Posterior cingulate gyrus (tissue), 11 donors: ENCODE measurements at regions of chr12 and their contacts with region 1.

Region 1: GRCh38 chr12:106302401-106303201 is at the start of gene TCP11L2:
- DNase-seq: peak; percentile 79 to 98 (median 88)

Region 2: GRCh38 chr12:106247674-106248311 is 54.8 kb before region 1 on chr12 and contains the start of gene CKAP4:
- intact Hi-C with region 1: loop called (anchors 2 kb)
- DNase-seq: peak in 9 of 10 donors; percentile 27 to 93 (median 56)